Mammary epithelial cell (primary cell): ENCODE measurements at regions of chr3 and their contacts with region 1.

Region 1: GRCh38 chr3:105729667-105730066 is 139.1 kb downstream of the CBLB start:
- DNase-seq: no peak
- H3K4me3 ChIP-seq: no peak overlapping the region
- H3K27ac ChIP-seq: no peak overlapping the region
- H3K4me1 ChIP-seq: no peaks in the 10 kb centered on the region
- H3K27me3 ChIP-seq: no peaks in the 10 kb centered on the region
- CTCF ChIP-seq: no peak

Region 2: GRCh38 chr3:105780107-105780506 is 50.4 kb after region 1 on chr3:
- CTCF ChIA-PET with region 1: no interaction called
- dilution Hi-C with region 1: loop called (anchors 5 kb)
- in situ Hi-C with region 1: no loop called
- intact Hi-C with region 1: no loop called
- DNase-seq: peak; percentile 44
- H3K4me3 ChIP-seq: no peak overlapping the region
- H3K27ac ChIP-seq: no peak overlapping the region
- H3K4me1 ChIP-seq: no peaks in the 10 kb centered on the region
- H3K27me3 ChIP-seq: no peaks in the 10 kb centered on the region
- CTCF ChIP-seq: no peak